Calu3 (cell line): ENCODE measurements at regions of chr7 and their contacts with region 1.

Region 1: DNA sequence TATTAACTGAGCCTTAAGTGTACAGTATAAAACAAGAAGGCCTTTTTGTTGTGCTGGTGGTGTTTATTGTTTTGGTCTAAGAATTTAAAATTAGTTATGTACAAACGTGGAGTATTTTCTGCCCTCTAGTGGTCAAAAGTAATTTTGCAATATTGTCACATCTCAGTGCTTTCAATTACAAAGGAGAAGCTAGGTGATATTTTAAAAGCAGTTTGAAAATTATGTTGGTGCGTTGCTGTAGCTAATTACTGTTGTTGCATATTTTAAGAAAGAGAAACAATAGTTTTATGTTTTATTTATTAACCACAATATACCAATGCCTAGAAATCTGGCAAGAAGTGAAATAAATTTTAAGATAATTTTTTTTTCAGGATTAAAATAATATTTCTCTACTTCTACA is 11.4 kb downstream of the NPVF start:
- DNase-seq: no peak
- H3K4me3 Mint-ChIP-seq: no peak overlapping the region
- H3K27ac Mint-ChIP-seq: no peak overlapping the region
- H3K4me1 Mint-ChIP-seq: no peaks in the 10 kb centered on the region
- H3K27me3 Mint-ChIP-seq: peaks cover 37% of the 10 kb centered on the region
- CTCF ChIP-seq: peak; percentile 84

Region 2: GRCh38 chr7:24555184-24555583 is 661.7 kb before region 1 on chr7:
- CTCF ChIA-PET with region 1: no interaction called
- intact Hi-C with region 1: no loop called
- DNase-seq: no peak
- H3K4me3 Mint-ChIP-seq: no peak overlapping the region
- H3K27ac Mint-ChIP-seq: no peak overlapping the region
- H3K4me1 Mint-ChIP-seq: no peaks in the 10 kb centered on the region
- H3K27me3 Mint-ChIP-seq: peaks cover 22% of the 10 kb centered on the region
- CTCF ChIP-seq: no peak

Region 3: GRCh38 chr7:25167262-25167843 is 49.5 kb before region 1 on chr7:
- CTCF ChIA-PET with region 1: interaction called, 4 read pairs
- intact Hi-C with region 1: loop called (anchors 10 kb)
- DNase-seq: peak; percentile 62
- H3K4me3 Mint-ChIP-seq: peak overlapping the region; percentile 40
- H3K27ac Mint-ChIP-seq: peak overlapping the region; percentile 50
- H3K4me1 Mint-ChIP-seq: peaks cover 38% of the 10 kb centered on the region
- H3K27me3 Mint-ChIP-seq: no peaks in the 10 kb centered on the region
- CTCF ChIP-seq: no peak

Region 4: GRCh38 chr7:25179771-25180591 is 36.9 kb before region 1 on chr7:
- CTCF ChIA-PET with region 1: interaction called, 45 read pairs
- intact Hi-C with region 1: loop called (anchors 1 kb)
- DNase-seq: peak; percentile 99
- H3K4me3 Mint-ChIP-seq: peak overlapping the region; percentile 83
- H3K27ac Mint-ChIP-seq: peak overlapping the region; percentile 57
- H3K4me1 Mint-ChIP-seq: no peaks in the 10 kb centered on the region
- H3K27me3 Mint-ChIP-seq: peaks cover 7% of the 10 kb centered on the region
- CTCF ChIP-seq: peak; percentile 99

Region 5: GRCh38 chr7:25196132-25196891 is 20.5 kb before region 1 on chr7:
- CTCF ChIA-PET with region 1: interaction called, 12 read pairs
- intact Hi-C with region 1: no loop called
- DNase-seq: peak; percentile 66
- H3K4me3 Mint-ChIP-seq: peak overlapping the region; percentile 0
- H3K27ac Mint-ChIP-seq: peak overlapping the region; percentile 28
- H3K4me1 Mint-ChIP-seq: peaks cover 17% of the 10 kb centered on the region
- H3K27me3 Mint-ChIP-seq: no peaks in the 10 kb centered on the region
- CTCF ChIP-seq: no peak